ENCODE measurements at regions of chr12 and their contacts with region 1.

Region 1: DNA sequence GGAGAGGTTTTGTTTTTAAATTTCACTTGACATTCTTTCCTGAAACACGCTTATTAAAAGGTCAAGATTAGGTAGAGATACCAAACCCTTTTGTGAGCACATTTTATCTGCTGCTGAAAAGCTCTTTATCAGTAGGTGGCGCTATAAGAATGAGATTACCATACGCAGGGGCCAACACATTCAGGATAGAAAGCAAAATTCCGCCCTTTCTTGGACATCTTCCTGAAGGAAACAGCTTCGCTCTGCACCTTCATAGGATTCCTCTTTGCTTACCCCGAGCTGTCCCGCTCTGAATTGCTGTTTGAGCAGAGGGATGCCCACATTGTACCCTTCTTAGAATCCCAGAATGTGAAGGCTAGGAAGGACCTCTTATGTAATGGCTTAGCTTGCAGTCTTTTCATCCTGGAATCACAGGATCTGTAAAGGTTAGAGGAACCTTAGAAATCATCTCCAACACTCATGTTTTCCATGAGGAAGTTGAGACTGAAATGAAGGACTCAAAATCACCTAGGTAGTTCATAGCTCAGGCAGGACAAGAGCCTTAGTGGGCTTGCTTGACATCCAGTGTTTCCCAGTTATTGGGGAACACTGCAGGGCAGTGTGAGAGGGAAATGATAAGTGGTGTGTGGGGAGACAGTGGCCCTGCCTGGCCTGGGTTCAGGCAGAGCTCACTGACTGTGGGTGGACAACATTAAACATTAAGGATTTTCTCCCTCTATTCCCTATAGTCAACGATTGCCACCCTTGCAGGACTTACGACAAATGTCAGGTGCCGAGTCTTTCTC is 38.7 kb upstream of the CRY1 start:
- DNase-seq: peak; percentile 72
- H3K4me3 Mint-ChIP-seq: no peak overlapping the region
- H3K27ac Mint-ChIP-seq: no peak overlapping the region
- H3K4me1 Mint-ChIP-seq: no peaks in the 10 kb centered on the region
- H3K27me3 Mint-ChIP-seq: no peaks in the 10 kb centered on the region
- CTCF ChIP-seq: peak; percentile 68

Region 2: DNA sequence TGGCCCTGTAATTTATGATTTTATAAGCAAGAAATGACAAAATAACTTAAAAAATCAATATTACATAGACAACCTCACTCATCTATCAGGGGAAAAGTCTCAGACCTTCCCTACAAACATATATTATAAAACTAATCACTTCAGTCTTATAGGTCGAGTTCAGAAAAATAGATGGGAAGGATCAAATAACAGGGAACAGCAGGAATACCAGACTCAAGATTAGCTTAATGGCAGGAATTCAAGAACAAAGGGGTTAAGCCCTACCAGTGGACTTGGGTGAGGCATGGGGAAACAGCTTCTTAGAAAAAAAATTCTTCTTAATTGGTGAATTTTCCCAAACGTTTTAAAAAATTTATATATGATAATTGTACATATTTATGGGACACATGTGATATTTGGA is 13.0 kb after region 1 on chr12:
- CTCF ChIA-PET with region 1: interaction called, 41 read pairs
- POLR2A ChIA-PET with region 1: no interaction called
- intact Hi-C with region 1: no loop called
- DNase-seq: no peak
- H3K4me3 Mint-ChIP-seq: no peak overlapping the region
- H3K27ac Mint-ChIP-seq: no peak overlapping the region
- H3K4me1 Mint-ChIP-seq: no peaks in the 10 kb centered on the region
- H3K27me3 Mint-ChIP-seq: no peaks in the 10 kb centered on the region
- CTCF ChIP-seq: no peak

Region 3: DNA sequence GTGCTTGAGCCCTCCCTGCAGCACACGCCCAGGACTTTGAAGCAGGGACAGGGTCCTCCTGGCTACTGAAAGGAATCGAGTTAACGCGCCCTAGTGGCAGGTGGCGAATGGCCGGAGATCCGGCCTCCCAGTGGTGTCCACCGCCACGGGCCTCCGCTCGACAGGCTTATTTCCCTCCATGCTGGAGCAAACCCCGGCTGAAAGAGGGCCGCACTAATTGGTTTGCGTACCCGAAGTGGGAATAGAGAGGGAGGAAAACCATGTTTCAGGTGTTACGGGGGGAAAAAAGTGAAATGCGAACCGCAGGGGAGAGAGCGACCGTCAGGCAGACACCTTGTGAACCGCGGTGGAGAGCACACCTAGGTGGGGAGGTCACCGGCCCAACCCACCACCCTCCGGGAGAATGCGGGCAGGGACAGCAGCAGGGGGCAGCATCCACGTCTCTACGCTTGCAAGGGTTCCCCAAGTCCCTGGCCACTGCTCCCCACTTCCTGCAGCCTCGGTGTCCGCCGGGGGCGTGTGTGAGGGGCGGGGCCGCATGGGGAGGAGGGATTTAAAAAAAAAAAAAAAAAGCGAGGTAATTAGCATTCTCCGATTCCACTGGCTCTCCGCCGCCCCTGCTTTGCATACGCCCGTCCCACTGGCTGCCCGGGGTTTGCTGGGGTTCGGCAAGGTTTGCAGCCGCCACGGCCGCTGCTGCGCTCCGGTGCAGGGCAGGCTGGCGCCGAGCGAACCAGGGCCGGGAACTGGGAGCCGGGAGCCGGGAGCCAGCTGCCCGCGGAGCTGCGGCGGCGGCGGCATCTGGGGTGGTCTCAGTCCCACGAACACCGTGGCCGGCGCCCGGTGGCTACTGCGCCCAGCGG is 186.0 kb after region 1 on chr12:
- CTCF ChIA-PET with region 1: interaction called, 5 read pairs
- POLR2A ChIA-PET with region 1: no interaction called
- intact Hi-C with region 1: loop called (anchors 5 kb)
- DNase-seq: peak; percentile 92
- H3K4me3 Mint-ChIP-seq: peak overlapping the region; percentile 77
- H3K27ac Mint-ChIP-seq: no peak overlapping the region
- H3K4me1 Mint-ChIP-seq: peaks cover 5% of the 10 kb centered on the region
- H3K27me3 Mint-ChIP-seq: peaks cover 54% of the 10 kb centered on the region
- CTCF ChIP-seq: peak; percentile 14

Region 4: GRCh38 chr12:107402041-107403022 is 270.3 kb after region 1 on chr12:
- CTCF ChIA-PET with region 1: interaction called, 150 read pairs
- POLR2A ChIA-PET with region 1: interaction called, 3 read pairs
- intact Hi-C with region 1: loop called (anchors 1 kb)
- DNase-seq: peak; percentile 81
- H3K4me3 Mint-ChIP-seq: no peak overlapping the region
- H3K27ac Mint-ChIP-seq: no peak overlapping the region
- H3K4me1 Mint-ChIP-seq: no peaks in the 10 kb centered on the region
- H3K27me3 Mint-ChIP-seq: no peaks in the 10 kb centered on the region
- CTCF ChIP-seq: peak; percentile 74

Region 5: DNA sequence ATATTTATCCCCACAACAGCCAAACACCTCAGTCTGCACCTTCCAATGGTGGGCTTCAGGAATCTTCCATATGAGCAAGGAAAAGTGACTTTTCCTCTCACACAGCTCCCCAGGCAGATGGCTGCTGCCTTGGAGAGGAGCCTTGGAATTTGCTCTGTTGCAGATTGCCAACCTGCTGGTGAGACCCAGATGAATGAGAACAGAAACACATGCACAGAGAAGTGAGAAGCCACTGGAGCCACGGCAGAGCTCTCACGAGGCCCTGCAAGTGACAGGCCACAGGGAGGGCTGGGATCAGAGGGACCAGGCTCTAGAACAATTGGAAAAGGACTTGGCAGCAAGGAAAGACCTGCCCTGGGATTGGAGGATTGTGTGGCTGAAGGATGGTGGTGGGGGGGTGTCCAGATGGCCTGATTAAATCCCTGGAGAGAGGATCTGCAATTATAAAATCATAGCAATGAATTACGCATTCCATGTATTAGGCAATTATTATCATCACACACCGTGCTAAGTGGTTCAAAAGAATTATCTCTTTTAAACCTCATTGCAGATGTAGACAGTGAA is 468.6 kb after region 1 on chr12:
- CTCF ChIA-PET with region 1: interaction called, 516 read pairs
- POLR2A ChIA-PET with region 1: interaction called, 4 read pairs
- intact Hi-C with region 1: no loop called
- DNase-seq: no peak
- H3K4me3 Mint-ChIP-seq: no peak overlapping the region
- H3K27ac Mint-ChIP-seq: no peak overlapping the region
- H3K4me1 Mint-ChIP-seq: no peaks in the 10 kb centered on the region
- H3K27me3 Mint-ChIP-seq: no peaks in the 10 kb centered on the region
- CTCF ChIP-seq: no peak

Region 6: GRCh38 chr12:107884769-107885694 is 753.0 kb after region 1 on chr12:
- CTCF ChIA-PET with region 1: no interaction called
- POLR2A ChIA-PET with region 1: no interaction called
- intact Hi-C with region 1: loop called (anchors 10 kb)
- DNase-seq: peak; percentile 64
- H3K4me3 Mint-ChIP-seq: no peak overlapping the region
- H3K27ac Mint-ChIP-seq: no peak overlapping the region
- H3K4me1 Mint-ChIP-seq: no peaks in the 10 kb centered on the region
- H3K27me3 Mint-ChIP-seq: peaks cover 23% of the 10 kb centered on the region
- CTCF ChIP-seq: peak; percentile 72

Measured in MCF 10A (cell line).